A549 (cell line): ENCODE measurements at regions of chr20 and their contacts with region 1.

Region 1: DNA sequence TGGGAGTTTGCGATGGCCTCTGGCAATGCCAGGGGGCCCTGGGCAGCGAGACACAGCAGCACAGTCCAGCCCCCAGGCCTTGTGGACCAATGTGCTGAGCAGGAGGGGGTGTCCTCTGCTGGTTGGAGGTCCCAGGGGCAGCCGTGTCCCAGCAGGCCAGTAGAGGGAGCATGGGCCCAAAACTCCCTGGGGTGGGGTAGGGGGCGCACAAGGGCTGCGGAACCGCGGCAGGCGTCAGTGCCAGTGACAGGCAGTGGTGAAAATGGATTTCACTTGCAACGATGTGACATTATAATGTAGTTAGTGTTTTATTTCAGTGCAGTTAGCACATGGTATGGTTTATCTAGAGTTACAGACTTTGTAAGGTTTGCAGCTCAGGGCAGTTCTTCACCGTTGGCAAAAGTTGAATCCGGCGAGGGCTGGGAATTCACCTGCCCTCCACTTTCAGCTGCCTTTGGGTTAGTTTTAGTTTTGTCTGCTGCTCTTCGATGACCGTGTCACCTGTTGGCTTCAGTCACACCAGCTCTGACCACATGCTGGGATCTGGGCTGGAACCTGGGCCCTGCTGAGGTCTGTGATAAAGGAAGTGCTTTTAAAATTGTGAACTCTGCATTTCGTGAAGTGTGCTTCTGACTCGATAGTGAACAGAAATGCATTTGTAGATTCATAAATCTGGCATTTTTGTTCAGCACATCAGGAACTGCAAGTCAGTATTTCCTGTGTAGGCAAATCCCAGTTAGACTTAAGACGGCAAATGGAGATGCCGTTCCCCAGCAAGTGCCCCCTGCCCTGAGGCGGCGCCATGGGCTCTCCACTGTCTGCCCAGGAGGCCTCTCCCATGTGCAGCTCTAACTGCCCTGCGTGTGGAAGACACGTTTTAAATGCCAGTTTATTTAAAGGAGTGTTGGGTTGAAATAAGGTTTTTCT is 46.8 kb downstream of the PYGB start:
- DNase-seq: peak; percentile 76 to 88
- ATAC-seq: peak; percentile 57 to 85
- H3K4me3 ChIP-seq: no peak overlapping the region
- H3K27ac ChIP-seq: peak overlapping the region in 1 of 2 experiments; percentile 79; a peak in 4 of 6 replicates
- H3K4me1 ChIP-seq: peaks cover 48% of the 10 kb centered on the region
- CTCF ChIP-seq: peak; percentile 96
- EP300 ChIP-seq: no peak
- POLR2A ChIP-seq: no peak
- RAD21 ChIP-seq: peak; percentile 85 to 89

Region 2: DNA sequence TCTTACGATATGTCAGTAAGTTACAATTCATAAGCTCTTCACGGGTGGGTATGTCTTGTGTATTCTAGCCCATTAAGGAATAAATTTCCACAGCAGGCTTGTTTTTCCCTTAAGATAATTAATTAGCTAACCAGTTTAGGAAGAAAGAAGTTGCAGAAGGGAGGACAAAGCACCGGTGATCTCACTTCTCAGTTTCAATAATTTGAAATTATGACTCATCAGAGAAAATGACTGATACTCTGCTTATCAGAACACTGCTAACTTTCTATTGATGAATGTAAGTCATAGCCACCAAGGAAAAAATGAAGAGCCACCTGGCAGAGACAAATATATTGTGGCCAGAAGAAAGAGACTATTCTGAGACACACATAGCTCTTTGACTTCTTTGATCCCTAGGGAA is 134.3 kb before region 1 on chr20:
- CTCF ChIA-PET with region 1: no interaction called
- POLR2A ChIA-PET with region 1: no interaction called
- DNase-seq: no peak
- ATAC-seq: no peak
- H3K4me3 ChIP-seq: no peak overlapping the region
- H3K27ac ChIP-seq: no peak overlapping the region
- H3K4me1 ChIP-seq: no peaks in the 10 kb centered on the region
- CTCF ChIP-seq: no peak
- EP300 ChIP-seq: no peak
- POLR2A ChIP-seq: no peak
- RAD21 ChIP-seq: no peak

Region 3: DNA sequence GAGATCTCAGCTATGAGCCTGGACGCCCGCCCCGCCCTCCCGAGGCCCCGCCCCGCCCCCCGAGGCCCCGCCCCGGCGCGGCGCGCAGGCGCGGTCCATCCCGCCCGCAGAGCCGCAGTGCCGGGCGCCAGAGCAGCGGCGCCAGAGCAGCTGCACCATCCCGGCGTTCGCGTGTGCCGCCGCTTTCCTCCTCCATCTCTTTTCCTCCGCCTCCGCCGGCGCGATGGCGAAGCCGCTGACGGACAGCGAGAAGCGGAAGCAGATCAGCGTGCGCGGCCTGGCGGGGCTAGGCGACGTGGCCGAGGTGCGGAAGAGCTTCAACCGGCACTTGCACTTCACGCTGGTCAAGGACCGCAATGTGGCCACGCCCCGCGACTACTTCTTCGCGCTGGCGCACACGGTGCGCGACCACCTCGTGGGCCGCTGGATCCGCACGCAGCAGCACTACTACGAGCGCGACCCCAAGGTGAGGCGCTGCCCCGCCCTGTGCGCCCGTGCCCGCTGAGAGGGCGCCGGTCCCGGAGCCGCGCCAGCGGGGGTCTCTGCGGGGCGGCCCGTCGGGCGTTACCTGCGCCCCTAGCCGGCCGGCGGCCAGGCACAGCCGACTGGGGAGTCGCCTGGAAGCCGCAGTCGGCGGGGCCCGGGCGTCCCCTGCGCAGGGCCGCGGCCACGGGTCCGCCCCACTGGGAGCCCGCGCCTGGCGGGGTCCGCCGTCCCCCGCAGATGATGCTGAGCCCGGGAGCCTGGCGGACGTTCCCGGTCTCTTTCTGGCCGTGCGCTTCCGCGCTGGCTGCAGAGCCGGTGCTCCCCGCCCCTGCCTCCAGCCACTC is 46.6 kb before region 1 on chr20 and contains the start of gene PYGB:
- CTCF ChIA-PET with region 1: interaction called, 27 read pairs
- POLR2A ChIA-PET with region 1: interaction called, 4 read pairs
- DNase-seq: peak; percentile 89 to 94
- ATAC-seq: peak; percentile 68 to 80
- H3K4me3 ChIP-seq: peak within 1 kb of the TSS; percentile 82
- H3K27ac ChIP-seq: peak within 1 kb of the TSS; percentile 92 to 96
- H3K4me1 ChIP-seq: peaks cover 57% of the 10 kb centered on the region
- CTCF ChIP-seq: no peak
- EP300 ChIP-seq: no peak
- POLR2A ChIP-seq: peak; percentile 98
- RAD21 ChIP-seq: peak in 1 of 2 experiments; percentile 20; a peak in 3 of 5 replicates
- polyA plus RNA-seq, gene PYGB: 100 and 113 TPM in 2 replicates

Region 4: DNA sequence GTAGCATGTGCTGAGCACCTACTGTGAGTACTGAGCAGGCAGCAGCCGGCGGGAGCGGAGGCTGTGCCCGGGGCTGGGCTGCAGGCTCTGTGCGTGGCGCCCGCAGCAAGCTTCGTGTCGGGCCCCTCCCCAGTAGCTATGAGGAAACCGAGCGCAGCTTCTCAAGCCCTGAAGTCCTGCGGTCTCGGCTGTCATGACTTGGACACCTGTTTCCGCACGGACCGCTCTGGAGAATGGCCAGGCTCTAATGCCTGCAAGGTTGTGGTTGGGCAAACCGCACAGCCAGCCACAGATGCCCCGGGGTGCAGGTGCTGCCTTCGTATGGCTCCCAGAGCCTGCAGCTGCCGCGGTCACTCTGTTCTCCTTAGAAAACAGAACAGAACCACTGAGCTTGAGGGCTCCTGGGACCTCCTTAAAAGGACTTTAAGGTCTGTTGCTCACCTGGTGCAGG is 13.2 kb before region 1 on chr20:
- CTCF ChIA-PET with region 1: interaction called, 42 read pairs
- POLR2A ChIA-PET with region 1: no interaction called
- DNase-seq: no peak
- ATAC-seq: no peak
- H3K4me3 ChIP-seq: no peak overlapping the region
- H3K27ac ChIP-seq: no peak overlapping the region
- H3K4me1 ChIP-seq: no peaks in the 10 kb centered on the region; the same call in 2 of the 3 replicates
- CTCF ChIP-seq: no peak
- EP300 ChIP-seq: no peak
- POLR2A ChIP-seq: no peak
- RAD21 ChIP-seq: no peak

Region 5: GRCh38 chr20:25318471-25319240 is 23.9 kb after region 1 on chr20:
- CTCF ChIA-PET with region 1: interaction called, 36 read pairs
- POLR2A ChIA-PET with region 1: no interaction called
- DNase-seq: no peak
- ATAC-seq: no peak
- H3K4me3 ChIP-seq: no peak overlapping the region
- H3K27ac ChIP-seq: peak overlapping the region in 1 of 2 experiments; percentile 9; a peak in 1 of 6 replicates
- H3K4me1 ChIP-seq: peaks cover 27% of the 10 kb centered on the region
- CTCF ChIP-seq: no peak
- EP300 ChIP-seq: no peak
- POLR2A ChIP-seq: no peak
- RAD21 ChIP-seq: no peak

Region 6: DNA sequence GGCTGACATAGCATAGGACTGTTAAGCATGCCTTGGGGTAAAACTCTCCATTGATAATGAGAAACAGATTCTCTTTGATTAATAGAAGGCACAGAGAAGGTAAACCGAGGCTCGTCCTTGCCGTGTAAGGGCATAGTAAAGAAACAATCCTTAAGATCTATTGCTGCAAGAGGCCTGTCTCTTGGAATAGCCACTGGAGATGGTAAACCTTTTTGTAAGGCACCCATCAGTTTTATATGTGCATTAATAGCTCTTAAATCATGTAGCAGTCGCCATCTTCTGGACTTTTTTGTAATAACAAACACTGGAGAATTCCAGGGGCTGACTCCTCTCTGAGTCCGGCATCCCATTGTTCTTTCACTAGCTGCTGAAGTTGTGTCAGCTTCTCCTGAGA is 104.3 kb after region 1 on chr20:
- CTCF ChIA-PET with region 1: interaction called, 135 read pairs
- POLR2A ChIA-PET with region 1: interaction called, 6 read pairs
- DNase-seq: peak; percentile 77 to 81
- ATAC-seq: peak; percentile 99
- H3K4me3 ChIP-seq: no peak overlapping the region
- H3K27ac ChIP-seq: peak overlapping the region; percentile 46; a peak in 5 of 6 replicates
- H3K4me1 ChIP-seq: peaks cover 18% of the 10 kb centered on the region
- CTCF ChIP-seq: peak; percentile 90
- EP300 ChIP-seq: no peak
- POLR2A ChIP-seq: no peak
- RAD21 ChIP-seq: peak; percentile 94 to 95

Region 7: DNA sequence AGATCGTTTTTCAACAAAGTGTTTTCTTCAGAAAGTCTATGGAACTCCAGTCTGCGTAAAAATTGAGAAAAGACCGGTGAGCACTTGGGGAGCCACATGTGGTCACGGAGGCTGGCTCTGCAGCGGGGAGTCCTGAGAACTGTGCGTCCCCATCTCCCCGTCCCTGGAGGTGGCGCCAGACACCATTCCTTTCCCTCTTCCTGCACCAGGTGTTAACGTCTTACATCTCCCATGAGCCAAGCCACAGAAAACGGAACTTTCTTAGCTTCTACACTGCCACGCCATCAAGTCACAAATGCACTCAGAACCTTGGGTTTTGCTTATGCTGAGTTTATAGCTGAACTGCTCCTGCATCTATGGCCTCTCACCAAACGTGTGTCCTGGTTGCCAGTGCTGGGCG is 175.3 kb after region 1 on chr20:
- CTCF ChIA-PET with region 1: no interaction called
- POLR2A ChIA-PET with region 1: no interaction called
- DNase-seq: peak in 1 of 2 experiments; percentile 60
- ATAC-seq: peak; percentile 67 to 84; a peak in 3 of 6 replicates
- H3K4me3 ChIP-seq: no peak overlapping the region
- H3K27ac ChIP-seq: no peak overlapping the region
- H3K4me1 ChIP-seq: no peaks in the 10 kb centered on the region
- CTCF ChIP-seq: peak; percentile 45
- EP300 ChIP-seq: no peak
- POLR2A ChIP-seq: no peak
- RAD21 ChIP-seq: peak; percentile 67 to 78